Activated CD4-positive, alpha-beta T cell treated with anti-CD3 and anti-CD28 coated beads, Interleukin-2, amount 10 ng/mL, durations not matched to agents 24 days and 14 days (primary cell): ENCODE measurements at regions of chr19 and their contacts with region 1.

Region 1: DNA sequence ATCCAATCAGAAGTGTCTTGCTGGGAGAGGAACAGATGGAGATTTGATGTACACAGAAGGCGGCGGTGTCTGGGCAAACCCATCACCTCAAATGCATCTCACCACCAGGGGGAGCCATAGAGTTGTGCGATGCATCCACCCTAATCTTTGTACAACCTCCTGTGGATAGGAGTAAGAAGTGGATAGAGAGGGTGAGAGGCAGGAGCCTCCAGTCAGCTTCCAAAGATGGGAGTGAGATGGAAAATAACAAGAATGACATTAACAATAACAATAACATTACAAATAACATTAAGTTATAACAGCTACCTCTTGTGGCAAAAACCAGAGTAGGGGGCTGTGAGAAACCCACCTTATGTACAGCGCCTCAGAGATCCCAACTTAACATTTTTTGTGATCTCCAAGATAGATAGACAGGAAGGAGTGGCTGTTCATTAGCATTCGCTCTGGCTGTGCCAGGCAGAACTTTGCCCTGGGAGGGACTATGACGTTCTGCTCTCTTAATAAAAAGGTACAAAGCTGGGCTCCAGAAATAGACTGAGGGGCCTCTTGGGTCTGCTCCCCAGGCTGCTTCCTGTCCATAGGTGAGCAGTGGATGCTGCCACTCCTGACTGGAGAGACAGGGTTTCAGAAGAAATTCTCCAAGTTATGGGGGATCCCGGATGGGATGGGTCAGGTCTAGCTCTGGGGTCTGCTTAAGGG is 5.2 kb upstream of the CEACAM18 start:
- DNase-seq: peak; percentile 94
- H3K4me3 Mint-ChIP-seq: no peak overlapping the region
- H3K27ac Mint-ChIP-seq: no peak overlapping the region
- H3K4me1 Mint-ChIP-seq: peaks cover 33% of the 10 kb centered on the region
- H3K27me3 Mint-ChIP-seq: peaks cover 7% of the 10 kb centered on the region

Region 2: DNA sequence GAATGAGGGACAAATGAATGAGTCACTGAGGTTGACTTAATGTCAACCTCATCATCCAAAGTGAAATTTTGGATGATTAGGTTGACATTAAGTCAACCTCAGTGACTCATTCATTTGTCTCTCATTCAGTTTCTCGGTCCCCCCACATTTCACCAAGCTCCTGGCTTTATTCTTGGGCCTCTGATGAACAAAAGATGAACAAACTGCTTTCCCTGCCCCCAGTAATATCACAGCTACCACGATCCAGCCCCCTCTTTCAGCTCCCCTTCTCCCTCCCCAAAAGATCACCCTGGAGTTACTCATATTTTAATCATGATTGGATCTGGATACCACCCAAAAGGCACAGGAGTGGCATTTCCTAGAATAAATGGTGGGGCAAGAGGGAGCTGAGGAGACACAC is 16.0 kb after region 1 on chr19:
- intact Hi-C with region 1: loop called (anchors 2 kb)
- DNase-seq: no peak
- H3K4me3 Mint-ChIP-seq: peak overlapping the region; percentile 46
- H3K27ac Mint-ChIP-seq: peak overlapping the region; percentile 83
- H3K4me1 Mint-ChIP-seq: peaks cover 19% of the 10 kb centered on the region
- H3K27me3 Mint-ChIP-seq: no peaks in the 10 kb centered on the region

Region 3: GRCh38 chr19:51514866-51515481 is 41.8 kb after region 1 on chr19:
- intact Hi-C with region 1: loop called (anchors 1 kb)
- DNase-seq: peak; percentile 79
- H3K4me3 Mint-ChIP-seq: no peak overlapping the region
- H3K27ac Mint-ChIP-seq: no peak overlapping the region
- H3K4me1 Mint-ChIP-seq: peaks cover 14% of the 10 kb centered on the region
- H3K27me3 Mint-ChIP-seq: peaks cover 27% of the 10 kb centered on the region

Region 4: GRCh38 chr19:51637362-51637978 is 164.3 kb after region 1 on chr19:
- intact Hi-C with region 1: loop called (anchors 1 kb)
- DNase-seq: no peak
- H3K4me3 Mint-ChIP-seq: no peak overlapping the region
- H3K27ac Mint-ChIP-seq: no peak overlapping the region
- H3K4me1 Mint-ChIP-seq: no peaks in the 10 kb centered on the region
- H3K27me3 Mint-ChIP-seq: peaks cover 32% of the 10 kb centered on the region

Region 5: GRCh38 chr19:51660975-51661600 is 187.9 kb after region 1 on chr19:
- intact Hi-C with region 1: loop called (anchors 2 kb)
- DNase-seq: peak; percentile 84
- H3K4me3 Mint-ChIP-seq: no peak overlapping the region
- H3K27ac Mint-ChIP-seq: no peak overlapping the region
- H3K4me1 Mint-ChIP-seq: peaks cover 5% of the 10 kb centered on the region
- H3K27me3 Mint-ChIP-seq: peaks cover 23% of the 10 kb centered on the region